ENCODE measurements at regions of chr2 and their contacts with region 1.

Region 1: GRCh38 chr2:119826370-119826961 is 66.7 kb downstream of the PTPN4 start:
- DNase-seq: peak; percentile 55
- H3K4me3 ChIP-seq: no peak overlapping the region
- H3K27ac ChIP-seq: no peak overlapping the region
- H3K4me1 ChIP-seq: peaks cover 1% of the 10 kb centered on the region; the same call in 1 of the 2 replicates
- H3K27me3 ChIP-seq: no peaks in the 10 kb centered on the region

Region 2: DNA sequence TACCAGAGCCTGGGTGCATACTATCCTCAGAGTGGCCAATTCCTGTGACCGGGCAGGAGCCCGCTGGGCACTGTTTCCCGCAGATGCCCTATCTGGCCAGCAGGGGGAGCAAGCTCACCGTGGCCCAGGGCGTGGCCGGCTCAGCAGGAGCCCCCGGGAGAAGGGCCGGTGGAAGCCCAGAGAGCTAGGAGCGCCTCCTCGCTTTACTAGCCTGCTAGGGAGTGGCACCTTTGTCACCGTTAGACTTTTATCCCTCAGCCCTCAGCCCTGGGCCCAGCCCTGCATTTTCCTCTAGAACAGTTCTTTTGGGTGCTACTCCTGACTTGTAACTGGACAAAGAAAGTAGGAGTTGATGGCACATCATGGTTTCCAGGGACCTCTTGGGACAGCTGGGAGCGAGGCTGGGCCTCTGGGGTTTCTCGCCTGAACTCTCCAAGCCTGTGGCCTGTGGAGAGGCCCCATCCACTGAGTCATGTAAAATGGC is 123.5 kb before region 1 on chr2:
- in situ Hi-C with region 1: loop called (anchors 10 kb)
- DNase-seq: peak; percentile 81
- H3K4me3 ChIP-seq: no peak overlapping the region
- H3K27ac ChIP-seq: no peak overlapping the region
- H3K4me1 ChIP-seq: peaks cover 4% of the 10 kb centered on the region; the same call in 1 of the 2 replicates
- H3K27me3 ChIP-seq: no peaks in the 10 kb centered on the region; the same call in 1 of the 2 replicates

Region 3: GRCh38 chr2:120125177-120125576 is 298.7 kb after region 1 on chr2:
- in situ Hi-C with region 1: no loop called
- DNase-seq: no peak
- H3K4me3 ChIP-seq: no peak overlapping the region
- H3K27ac ChIP-seq: no peak overlapping the region
- H3K4me1 ChIP-seq: no peaks in the 10 kb centered on the region
- H3K27me3 ChIP-seq: no peaks in the 10 kb centered on the region